Cardiac septum (tissue), 1 donor: ENCODE measurements at regions of chr4 and their contacts with region 1.

Region 1: GRCh38 chr4:87530868-87531267 is 1.7 kb upstream of the SPARCL1 start:
- DNase-seq: no peak

Region 2: DNA sequence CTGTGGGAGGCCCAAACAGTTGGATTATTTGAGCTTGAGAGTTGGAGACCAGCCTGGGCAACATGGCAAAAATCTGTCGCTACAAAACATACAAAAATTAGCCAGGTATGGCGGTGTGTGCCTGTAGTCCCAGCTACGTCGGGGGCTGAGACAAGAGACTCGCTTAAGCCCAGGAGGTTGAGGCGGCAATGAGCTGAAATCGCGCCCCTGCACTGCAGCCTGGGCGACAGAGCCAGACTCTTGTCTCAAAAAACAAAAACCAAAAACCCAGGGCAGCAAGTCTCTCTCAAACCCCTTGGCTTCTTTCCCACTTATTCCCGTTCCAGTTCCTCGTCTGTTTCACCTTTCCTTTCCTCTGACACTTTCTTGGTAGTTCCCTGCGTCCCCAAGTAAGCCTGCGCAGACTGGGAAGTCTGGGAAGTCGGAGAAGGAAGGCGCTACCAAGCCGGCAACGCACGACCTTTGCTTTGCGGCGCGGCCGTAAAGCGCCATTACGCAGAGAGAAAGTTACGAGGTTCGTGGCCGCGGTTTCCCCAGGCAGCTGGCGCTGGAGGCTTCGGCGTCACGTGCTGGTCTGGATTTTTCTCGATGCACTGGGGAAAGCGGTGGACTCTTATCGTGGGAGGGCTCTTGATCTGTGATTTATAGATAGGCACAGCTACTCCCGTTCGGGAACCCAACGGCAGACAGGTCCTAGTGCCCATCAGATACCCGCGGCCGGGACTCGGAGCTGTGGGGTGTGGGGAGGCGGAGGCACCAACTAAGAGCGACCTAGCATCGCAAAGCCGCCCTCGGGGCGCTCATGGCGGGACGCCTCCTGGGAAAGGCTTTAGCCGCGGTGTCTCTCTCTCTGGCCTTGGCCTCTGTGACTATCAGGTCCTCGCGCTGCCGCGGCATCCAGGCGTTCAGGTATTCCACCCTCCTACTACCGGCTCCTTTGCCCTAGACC is 108.5 kb before region 1 on chr4 and contains the start of gene NUDT9:
- intact Hi-C with region 1: loop called (anchors 5 kb)
- DNase-seq: peak; percentile 96
- total RNA-seq, gene NUDT9: 21.5 TPM

Region 3: GRCh38 chr4:87716371-87717265 is 185.8 kb after region 1 on chr4:
- intact Hi-C with region 1: loop called (anchors 2 kb)
- DNase-seq: no peak